Activated naive CD8-positive, alpha-beta T cell treated with anti-CD3 and anti-CD28 coated beads, Interleukin-2, amount 10 ng/mL, durations not matched to agents 7 days and 5 days (primary cell): ENCODE measurements at regions of chr7 and their contacts with region 1.

Region 1: DNA sequence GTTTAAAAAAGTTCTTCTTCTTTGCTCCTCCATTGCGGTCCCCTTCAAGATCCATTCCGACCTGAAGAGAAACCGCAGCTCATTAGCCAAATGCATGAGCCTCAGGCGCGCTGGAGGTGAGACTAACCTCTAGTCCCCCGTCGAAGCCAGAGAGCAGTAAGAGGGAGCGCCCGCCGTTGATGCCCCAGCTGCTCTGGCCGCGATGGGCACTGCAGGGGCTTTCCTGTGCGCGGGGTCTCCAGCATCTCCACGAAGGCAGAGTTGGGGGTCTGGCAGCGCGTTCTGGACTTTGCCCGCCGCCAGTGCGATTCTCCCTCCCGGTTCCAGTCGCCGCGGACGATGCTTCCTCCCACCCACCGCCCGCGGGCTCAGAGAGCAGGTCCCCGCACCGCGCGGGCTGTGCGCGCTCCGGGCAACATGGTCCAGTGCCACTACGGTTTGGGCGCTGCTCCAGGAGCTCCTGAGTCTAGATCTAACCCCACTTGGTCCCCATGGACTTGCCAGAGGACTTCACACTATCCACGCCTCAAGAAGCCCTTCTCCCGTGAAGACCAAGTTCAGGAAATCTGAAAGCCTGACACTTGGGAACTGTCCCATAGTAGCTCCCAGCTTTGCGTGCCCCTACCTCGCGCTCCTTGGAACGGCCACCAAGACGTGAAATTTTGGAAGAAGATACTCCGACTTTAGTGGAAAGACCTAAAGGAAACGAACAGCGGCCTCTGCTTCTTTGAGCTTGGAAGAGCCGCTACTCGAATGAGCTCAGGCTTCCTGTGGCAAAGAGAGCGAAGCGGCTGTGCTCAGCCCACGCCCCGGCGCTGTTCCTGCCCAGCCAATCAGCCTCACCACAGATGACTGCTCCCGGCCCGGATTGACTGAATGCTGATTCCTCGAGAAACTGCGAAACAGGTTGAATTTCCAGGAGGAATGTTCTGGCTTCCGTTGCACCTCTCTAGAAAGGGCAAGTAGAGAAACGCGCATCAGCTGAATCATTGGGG is at the start of gene ABCB1:
- DNase-seq: peak; percentile 57
- ATAC-seq: peak; percentile 87
- H3K4me3 Mint-ChIP-seq: peak within 1 kb of the TSS; percentile 64
- H3K27ac Mint-ChIP-seq: peak within 1 kb of the TSS; percentile 67
- H3K4me1 Mint-ChIP-seq: peaks cover 10% of the 10 kb centered on the region
- H3K27me3 Mint-ChIP-seq: peaks cover 14% of the 10 kb centered on the region
- total RNA-seq, gene ABCB1: 30.8 to 35.0 TPM

Region 2: GRCh38 chr7:87628780-87629569 is 28.5 kb after region 1 on chr7:
- POLR2A ChIA-PET with region 1: interaction called, 13 read pairs
- DNase-seq: no peak
- ATAC-seq: peak; percentile 13
- H3K4me3 Mint-ChIP-seq: peak overlapping the region; percentile 88
- H3K27ac Mint-ChIP-seq: no peak overlapping the region
- H3K4me1 Mint-ChIP-seq: peaks cover 11% of the 10 kb centered on the region
- H3K27me3 Mint-ChIP-seq: peaks cover 25% of the 10 kb centered on the region

Region 3: GRCh38 chr7:87648316-87648715 is 47.9 kb after region 1 on chr7:
- POLR2A ChIA-PET with region 1: no interaction called
- DNase-seq: no peak
- ATAC-seq: no peak
- H3K4me3 Mint-ChIP-seq: no peak overlapping the region
- H3K27ac Mint-ChIP-seq: no peak overlapping the region
- H3K4me1 Mint-ChIP-seq: no peaks in the 10 kb centered on the region
- H3K27me3 Mint-ChIP-seq: no peaks in the 10 kb centered on the region